ENCODE measurements at regions of chr1 and their contacts with region 1.

Region 1: GRCh38 chr1:178870944-178871343 is at the start of gene ANGPTL1:
- DNase-seq: peak in 1 of 2 donors; percentile 20
- H3K4me3 ChIP-seq: peak within 1 kb of the TSS; percentile 48 to 55
- H3K27ac ChIP-seq: peak within 1 kb of the TSS; percentile 65 to 79
- H3K4me1 ChIP-seq: peaks cover 0 to 21% (median 10%) of the 10 kb centered on the region in 4 donors
- H3K27me3 ChIP-seq: no peaks in the 10 kb centered on the region
- CTCF ChIP-seq: no peak

Region 2: GRCh38 chr1:178931858-178932551 is 61.1 kb after region 1 on chr1:
- intact Hi-C with region 1: loop called (anchors 5 kb)
- DNase-seq: peak; percentile 89 to 92
- H3K4me3 ChIP-seq: no peak overlapping the region
- H3K27ac ChIP-seq: peak overlapping the region; percentile 86 to 90
- H3K4me1 ChIP-seq: peaks cover 0 to 68% (median 39%) of the 10 kb centered on the region in 4 donors
- H3K27me3 ChIP-seq: no peaks in the 10 kb centered on the region
- CTCF ChIP-seq: no peak

Measured in tibial artery (tissue), 4 donors.